ENCODE measurements at regions of chr7 and their contacts with region 1.

Region 1: DNA sequence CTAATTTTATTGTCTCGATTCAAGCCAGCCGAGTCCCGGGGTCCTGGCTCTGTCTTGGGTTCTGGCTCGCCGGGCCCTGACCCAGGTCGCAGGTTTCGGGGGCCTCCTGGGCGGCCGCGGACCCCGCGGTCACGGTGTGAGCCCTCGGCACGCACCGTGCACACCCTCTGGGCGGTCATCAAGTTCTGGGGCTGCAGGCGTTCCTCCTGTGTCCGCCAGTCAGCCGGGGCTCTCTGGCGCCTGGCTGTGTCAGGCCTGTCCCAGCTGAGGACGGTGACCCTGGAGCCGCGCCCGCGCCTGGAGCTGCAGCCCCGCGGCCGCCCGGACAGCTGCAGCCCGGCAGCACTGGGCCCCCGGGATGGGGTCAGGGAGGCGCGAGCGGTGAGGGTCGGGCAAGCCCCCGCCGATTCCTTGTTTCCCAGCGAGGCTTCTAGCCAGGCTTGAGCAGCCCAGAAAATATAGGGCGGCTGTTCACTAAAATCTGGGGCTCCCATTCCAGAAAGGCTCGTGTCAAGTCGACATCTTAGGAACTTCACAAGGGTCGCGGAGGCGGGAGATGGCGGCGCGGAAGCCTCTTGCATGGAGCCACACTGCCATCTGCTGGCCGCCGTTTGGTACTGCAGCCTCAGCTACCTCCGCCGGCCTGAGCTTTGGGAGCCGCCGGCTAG is 4.2 kb upstream of the HOXA7 start:
- DNase-seq: no peak
- ATAC-seq: peak; percentile 41
- H3K4me3 ChIP-seq: peak overlapping the region; percentile 49 to 77
- H3K27ac ChIP-seq: peak overlapping the region; percentile 91
- H3K4me1 ChIP-seq: peaks cover 14 to 53% of the 10 kb centered on the region in 2 experiments
- H3K27me3 ChIP-seq: no peaks in the 10 kb centered on the region
- CTCF ChIP-seq: peak in 2 of 3 experiments; percentile 89 to 95; a peak in 4 of 6 replicates
- POLR2A ChIP-seq: no peak
- RAD21 ChIP-seq: no peak

Region 2: DNA sequence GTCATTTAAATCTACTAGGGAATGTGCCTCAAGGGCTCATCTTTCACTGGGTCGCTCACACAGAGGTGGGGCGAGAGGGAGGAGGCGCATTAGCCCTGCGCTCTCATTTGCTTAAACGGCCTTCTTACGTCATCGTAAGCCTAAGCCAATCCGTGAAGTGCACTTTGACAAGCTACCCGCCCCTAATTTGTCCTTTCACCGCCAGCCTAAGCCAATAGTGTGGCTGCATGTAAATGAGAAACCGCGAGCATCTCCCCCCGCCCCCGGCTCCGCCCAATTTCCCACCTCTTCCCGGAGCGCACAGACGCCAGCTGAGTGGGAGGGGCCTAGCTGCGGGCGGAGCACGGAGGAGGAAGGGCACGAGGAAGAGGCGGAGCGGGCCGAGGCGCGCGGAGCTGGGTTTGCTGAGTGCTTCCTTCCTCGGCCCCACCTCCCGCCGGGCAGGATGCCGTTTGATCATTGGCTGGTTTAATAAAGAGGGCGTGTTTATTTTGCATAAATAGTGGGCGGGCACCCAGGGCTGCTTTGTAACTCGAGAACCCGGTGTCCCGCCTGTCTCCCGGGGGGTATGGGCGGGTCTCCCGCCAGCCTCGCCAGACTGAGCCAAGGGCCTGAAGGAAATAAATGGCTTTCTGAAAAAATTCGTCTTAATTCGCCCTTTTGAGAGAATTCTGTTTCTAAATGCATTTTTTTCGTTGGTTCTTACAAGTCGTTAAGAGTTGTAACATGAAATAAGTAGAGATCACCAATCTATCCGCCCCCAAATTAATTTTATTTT is 1298.2 kb before region 1 on chr7:
- CTCF ChIA-PET with region 1: interaction called, 3 read pairs
- POLR2A ChIA-PET with region 1: no interaction called
- RAD21 ChIA-PET with region 1: no interaction called
- intact Hi-C with region 1: loop called (anchors 10 kb)
- DNase-seq: peak; percentile 100
- ATAC-seq: peak; percentile 94
- H3K4me3 ChIP-seq: peak overlapping the region in 1 of 2 experiments; percentile 46; a peak in 1 of 4 replicates
- H3K27ac ChIP-seq: no peak overlapping the region
- H3K4me1 ChIP-seq: peaks cover 0 to 12% of the 10 kb centered on the region in 2 experiments; a peak in 2 of 4 replicates
- H3K27me3 ChIP-seq: peaks cover 38% of the 10 kb centered on the region
- CTCF ChIP-seq: no peak
- POLR2A ChIP-seq: no peak
- RAD21 ChIP-seq: no peak

Region 3: DNA sequence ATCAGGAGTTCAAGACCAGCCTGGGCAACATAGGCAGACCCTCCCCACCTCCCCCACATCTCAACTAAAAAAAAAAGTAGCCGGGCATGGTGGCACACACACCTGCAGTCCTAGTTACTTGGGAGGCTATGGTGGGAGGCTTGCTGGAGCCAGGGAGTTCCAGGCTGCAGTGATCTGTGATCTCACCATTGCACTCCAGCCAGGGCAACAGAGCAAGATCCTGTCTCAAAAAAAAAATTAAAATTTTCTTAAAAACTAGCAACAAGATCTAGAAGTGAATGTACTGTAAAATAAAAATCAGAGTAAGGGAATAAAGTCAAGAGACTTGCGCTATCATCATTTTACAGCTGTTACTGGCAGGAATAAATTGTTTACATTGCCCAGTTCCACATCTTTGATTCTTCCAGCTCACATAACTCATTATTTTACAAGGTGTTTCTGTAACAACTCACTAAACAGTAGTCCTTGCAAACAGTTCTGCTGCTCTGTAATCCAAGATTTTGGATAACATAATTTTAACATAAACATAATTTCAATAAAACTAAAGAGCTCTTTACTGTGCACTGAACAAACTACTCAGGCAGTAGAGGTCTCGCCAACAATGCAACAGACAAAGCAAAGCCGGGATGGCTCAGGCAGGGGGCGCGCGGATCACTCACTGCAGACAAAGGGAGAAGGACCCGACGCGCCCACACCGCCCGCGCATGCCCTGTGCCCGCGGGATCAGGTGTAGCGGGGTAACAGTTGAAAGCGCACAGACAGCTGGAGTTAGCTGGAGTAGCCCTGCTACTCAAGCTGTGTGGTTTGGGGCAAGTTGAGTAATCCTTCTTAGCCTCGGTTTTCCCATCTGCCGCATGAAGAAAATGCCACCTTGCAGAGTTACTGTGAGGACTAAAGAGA is 1082.0 kb before region 1 on chr7:
- CTCF ChIA-PET with region 1: no interaction called
- POLR2A ChIA-PET with region 1: no interaction called
- RAD21 ChIA-PET with region 1: no interaction called
- intact Hi-C with region 1: loop called (anchors 2 kb)
- DNase-seq: peak; percentile 41
- ATAC-seq: peak; percentile 100
- H3K4me3 ChIP-seq: peak overlapping the region; percentile 16 to 43
- H3K27ac ChIP-seq: no peak overlapping the region
- H3K4me1 ChIP-seq: peaks cover 2 to 19% of the 10 kb centered on the region in 2 experiments; a peak in 3 of 4 replicates
- H3K27me3 ChIP-seq: no peaks in the 10 kb centered on the region
- CTCF ChIP-seq: peak; percentile 58 to 68 (median 65)
- POLR2A ChIP-seq: no peak
- RAD21 ChIP-seq: peak; percentile 76

Region 4: DNA sequence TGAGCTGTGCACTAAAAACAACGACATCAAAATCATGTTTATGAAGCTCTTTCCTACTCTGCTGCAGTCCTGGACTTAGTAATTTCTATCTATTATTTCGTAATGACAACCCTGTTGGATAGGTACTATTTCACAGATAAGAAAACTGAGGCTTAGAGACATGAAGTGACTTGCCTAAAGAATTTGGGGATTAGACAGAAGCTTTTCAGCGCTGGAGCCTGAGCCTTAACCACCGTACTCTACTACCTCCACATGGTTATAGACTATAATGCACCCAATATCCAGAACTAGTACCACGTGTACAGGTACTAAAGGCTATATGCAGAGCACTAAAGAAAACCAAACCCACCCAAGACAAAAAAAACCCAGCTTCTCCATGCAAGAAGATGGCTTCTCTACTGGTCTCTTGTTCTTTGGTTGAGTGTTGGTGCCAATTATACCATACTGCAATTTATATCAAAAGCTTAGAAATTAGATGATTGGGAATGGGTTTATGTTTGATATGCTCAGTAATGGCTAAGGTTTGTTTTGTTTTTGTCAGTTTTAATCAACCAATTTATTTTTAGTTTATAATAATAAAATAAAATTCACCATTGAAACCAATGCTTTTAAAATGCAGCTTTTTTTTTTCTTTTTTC is 875.6 kb before region 1 on chr7:
- CTCF ChIA-PET with region 1: interaction called, 3 read pairs
- POLR2A ChIA-PET with region 1: no interaction called
- RAD21 ChIA-PET with region 1: no interaction called
- intact Hi-C with region 1: loop called (anchors 5 kb)
- DNase-seq: peak; percentile 61
- ATAC-seq: peak; percentile 100
- H3K4me3 ChIP-seq: no peak overlapping the region
- H3K27ac ChIP-seq: no peak overlapping the region
- H3K4me1 ChIP-seq: no peaks in the 10 kb centered on the region
- H3K27me3 ChIP-seq: no peaks in the 10 kb centered on the region
- CTCF ChIP-seq: peak; percentile 45 to 61 (median 53); a peak in 5 of 6 replicates
- POLR2A ChIP-seq: no peak
- RAD21 ChIP-seq: peak; percentile 76

Region 5: DNA sequence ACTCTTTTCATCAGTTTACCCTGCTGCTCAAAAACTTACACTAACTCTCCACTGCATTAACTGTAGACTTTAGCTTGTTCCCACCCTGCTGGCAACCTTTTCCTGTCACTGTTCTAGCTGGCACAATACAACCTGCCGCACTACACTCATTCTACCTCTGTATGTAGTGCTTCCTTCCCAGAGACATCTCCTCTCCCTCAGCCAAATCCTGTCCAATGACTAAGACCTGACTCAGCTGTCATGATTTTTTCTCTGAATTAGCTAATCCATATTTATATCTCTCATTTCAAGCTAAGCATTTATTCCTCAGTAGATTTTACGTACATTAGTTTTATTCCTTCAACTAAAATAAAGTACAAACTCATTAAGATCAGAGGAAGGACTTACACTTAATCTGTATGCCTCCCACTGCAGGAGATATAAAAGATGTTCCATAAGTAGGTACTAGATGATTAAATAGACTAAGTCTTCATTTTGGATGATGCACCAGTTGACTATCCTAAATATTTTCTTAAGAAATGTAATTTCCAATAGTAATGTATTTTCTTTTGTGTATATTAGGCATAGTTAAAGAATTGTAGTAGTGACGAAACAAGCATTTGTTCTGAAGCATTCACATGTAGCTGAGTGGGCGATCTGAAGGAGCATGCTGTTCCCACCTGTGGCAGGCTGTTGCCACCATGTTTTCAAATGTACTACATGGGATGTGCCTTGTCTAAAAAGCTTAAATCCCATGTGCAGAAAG is 485.4 kb before region 1 on chr7:
- CTCF ChIA-PET with region 1: interaction called, 10 read pairs
- POLR2A ChIA-PET with region 1: interaction called, 5 read pairs
- RAD21 ChIA-PET with region 1: interaction called in 1 of 2 experiments, 3 read pairs
- intact Hi-C with region 1: no loop called
- DNase-seq: no peak
- ATAC-seq: peak; percentile 67
- H3K4me3 ChIP-seq: no peak overlapping the region
- H3K27ac ChIP-seq: no peak overlapping the region
- H3K4me1 ChIP-seq: peaks cover 0 to 7% of the 10 kb centered on the region in 2 experiments; a peak in 1 of 4 replicates
- H3K27me3 ChIP-seq: no peaks in the 10 kb centered on the region
- CTCF ChIP-seq: no peak
- POLR2A ChIP-seq: no peak
- RAD21 ChIP-seq: no peak

Region 6: GRCh38 chr7:26853788-26854393 is 306.8 kb before region 1 on chr7:
- CTCF ChIA-PET with region 1: interaction called, 17 read pairs
- POLR2A ChIA-PET with region 1: no interaction called
- RAD21 ChIA-PET with region 1: no interaction called
- intact Hi-C with region 1: no loop called
- DNase-seq: peak; percentile 31
- ATAC-seq: peak; percentile 67
- H3K4me3 ChIP-seq: no peak overlapping the region
- H3K27ac ChIP-seq: no peak overlapping the region
- H3K4me1 ChIP-seq: peaks cover 0 to 15% of the 10 kb centered on the region in 2 experiments; a peak in 3 of 4 replicates
- H3K27me3 ChIP-seq: no peaks in the 10 kb centered on the region
- CTCF ChIP-seq: peak; percentile 50 to 76 (median 58); a peak in 5 of 6 replicates
- POLR2A ChIP-seq: no peak
- RAD21 ChIP-seq: peak; percentile 76

Region 7: GRCh38 chr7:26948617-26949118 is 212.0 kb before region 1 on chr7:
- CTCF ChIA-PET with region 1: no interaction called
- POLR2A ChIA-PET with region 1: no interaction called
- RAD21 ChIA-PET with region 1: no interaction called
- intact Hi-C with region 1: no loop called
- DNase-seq: no peak
- ATAC-seq: no peak
- H3K4me3 ChIP-seq: no peak overlapping the region
- H3K27ac ChIP-seq: no peak overlapping the region
- H3K4me1 ChIP-seq: no peaks in the 10 kb centered on the region
- H3K27me3 ChIP-seq: no peaks in the 10 kb centered on the region
- CTCF ChIP-seq: no peak
- POLR2A ChIP-seq: no peak
- RAD21 ChIP-seq: no peak

Measured in HCT116 (cell line).